ENCODE measurements at regions of chr9 and their contacts with region 1.

Region 1: DNA sequence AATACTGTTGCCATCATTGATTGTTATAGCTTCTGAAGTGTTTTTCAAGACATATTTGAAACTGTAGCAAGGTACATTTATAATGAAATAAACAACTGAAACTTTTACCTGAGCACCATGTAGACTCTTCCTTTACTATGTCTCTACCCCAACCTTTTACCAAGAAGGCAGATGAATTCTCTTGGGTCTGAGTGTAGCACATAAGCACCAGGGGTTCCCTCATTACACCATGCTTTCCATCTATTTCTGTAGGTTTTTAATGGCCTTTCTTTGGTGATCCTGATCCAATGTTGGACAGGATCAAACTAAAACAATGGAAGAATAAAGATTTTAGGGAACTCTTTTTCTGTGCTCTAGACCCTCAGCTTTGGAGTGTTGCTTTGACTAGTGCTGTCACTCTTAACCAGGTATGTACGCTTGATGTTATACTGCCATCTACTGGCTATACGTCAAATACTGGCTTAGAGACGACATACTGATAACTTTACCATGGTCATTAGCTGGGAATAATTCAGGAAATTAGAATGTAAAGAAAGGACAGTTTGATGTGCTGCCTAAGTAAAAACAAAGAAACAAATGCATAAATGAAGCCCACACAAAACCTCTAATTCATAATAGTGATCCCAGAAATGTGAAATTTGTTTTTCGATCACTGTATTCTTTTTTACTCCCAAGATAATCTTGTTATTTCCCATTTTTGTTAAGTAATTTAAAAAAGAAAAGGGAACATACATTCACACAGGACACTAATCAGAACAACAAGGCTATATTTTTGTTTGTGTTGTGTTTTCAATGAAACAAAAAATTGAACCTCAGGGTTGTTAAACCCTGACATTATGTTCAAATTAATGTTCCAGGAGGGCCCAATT is 30.7 kb downstream of the IFNW1 start:
- DNase-seq: peak; percentile 68
- H3K4me3 ChIP-seq: no peak overlapping the region
- H3K27ac ChIP-seq: no peak overlapping the region
- H3K4me1 ChIP-seq: no peaks in the 10 kb centered on the region
- H3K27me3 ChIP-seq: no peaks in the 10 kb centered on the region

Region 2: DNA sequence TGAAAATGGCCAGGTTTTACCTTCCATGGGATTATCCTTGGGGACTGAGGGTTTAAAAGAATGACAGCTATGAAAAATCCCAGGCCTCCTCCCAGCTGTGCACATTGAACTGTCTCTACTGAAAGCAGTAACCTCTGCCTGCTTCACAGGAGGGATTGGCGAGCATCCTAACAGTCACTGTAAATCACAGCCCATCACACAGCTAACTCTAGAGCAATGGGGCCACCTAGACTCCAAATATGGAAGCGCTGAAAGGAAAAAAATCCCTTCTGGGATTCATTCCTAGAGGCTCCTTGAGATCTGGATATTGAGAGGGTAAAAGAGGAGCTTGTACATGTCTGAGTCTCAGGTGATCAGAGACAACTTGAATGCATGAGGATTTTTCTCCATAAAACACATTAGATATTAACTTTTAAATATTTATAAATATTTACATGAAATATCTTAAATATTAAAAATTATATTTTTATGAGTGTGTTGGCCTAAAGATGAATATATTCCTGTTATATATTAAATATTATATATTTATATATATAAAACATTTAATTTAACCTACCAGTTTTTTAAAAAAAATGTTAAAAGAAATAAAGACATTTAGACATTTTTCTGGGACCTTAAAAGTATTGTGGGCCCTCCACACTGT is 1188.3 kb before region 1 on chr9:
- in situ Hi-C with region 1: loop called (anchors 5 kb)
- DNase-seq: peak; percentile 72
- H3K4me3 ChIP-seq: no peak overlapping the region
- H3K27ac ChIP-seq: no peak overlapping the region
- H3K4me1 ChIP-seq: 0 out of 2 replicates have a peak, but pooled peaks cover 3% of the 10 kb centered on the region
- H3K27me3 ChIP-seq: no peaks in the 10 kb centered on the region

Region 3: GRCh38 chr9:20356403-20357035 is 754.4 kb before region 1 on chr9:
- in situ Hi-C with region 1: loop called (anchors 10 kb)
- DNase-seq: peak; percentile 89
- H3K4me3 ChIP-seq: peak overlapping the region; percentile 47
- H3K27ac ChIP-seq: peak overlapping the region; percentile 64
- H3K4me1 ChIP-seq: peaks cover 38% of the 10 kb centered on the region
- H3K27me3 ChIP-seq: no peaks in the 10 kb centered on the region

Region 4: GRCh38 chr9:20622330-20623020 is 488.5 kb before region 1 on chr9 and contains the start of gene MLLT3:
- in situ Hi-C with region 1: loop called (anchors 10 kb)
- DNase-seq: peak; percentile 98
- H3K4me3 ChIP-seq: peak within 1 kb of the TSS; percentile 91
- H3K27ac ChIP-seq: peak within 1 kb of the TSS; percentile 79
- H3K4me1 ChIP-seq: peaks cover 15% of the 10 kb centered on the region
- H3K27me3 ChIP-seq: no peaks in the 10 kb centered on the region
- total RNA-seq, gene MLLT3: 11.9 and 12.1 TPM in 2 replicates

Region 5: GRCh38 chr9:20884985-20885593 is 225.9 kb before region 1 on chr9:
- in situ Hi-C with region 1: loop called (anchors 25 kb)
- DNase-seq: peak; percentile 66
- H3K4me3 ChIP-seq: no peak overlapping the region
- H3K27ac ChIP-seq: no peak overlapping the region
- H3K4me1 ChIP-seq: no peaks in the 10 kb centered on the region
- H3K27me3 ChIP-seq: no peaks in the 10 kb centered on the region

Measured in GM23248 (cell line).